BJ (cell line): ENCODE measurements at regions of chr21 and their contacts with region 1.

Region 1: GRCh38 chr21:39125752-39126485 is 57.3 kb downstream of the PSMG1 start:
- DNase-seq: no peak
- H3K4me3 ChIP-seq: no peak overlapping the region
- H3K27me3 ChIP-seq: no peaks in the 10 kb centered on the region; the same call in 1 of the 2 replicates
- CTCF ChIP-seq: peak; percentile 73

Region 2: DNA sequence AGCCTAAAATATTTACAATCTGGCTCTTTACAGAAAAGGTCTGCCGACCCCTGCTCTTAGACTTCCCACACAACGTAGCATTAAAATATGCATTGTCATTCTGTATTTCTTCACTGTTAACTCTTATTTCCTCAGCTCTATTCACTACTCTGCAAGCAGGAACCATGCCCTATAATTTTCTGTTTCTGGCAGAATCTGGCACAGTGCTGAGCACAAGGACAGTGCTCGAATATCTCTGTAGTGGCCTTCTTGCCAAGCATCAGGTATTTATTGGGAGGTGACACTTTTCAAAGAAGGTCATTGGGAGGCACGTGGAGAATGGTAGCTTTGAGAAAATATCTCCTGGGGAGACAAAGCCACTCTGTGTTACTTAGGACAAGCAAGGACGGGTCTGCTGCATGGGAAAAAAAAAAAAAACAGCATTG is 20.6 kb before region 1 on chr21:
- CTCF ChIA-PET with region 1: interaction called, 17 read pairs
- POLR2A ChIA-PET with region 1: no interaction called
- DNase-seq: no peak
- H3K4me3 ChIP-seq: no peak overlapping the region
- H3K27me3 ChIP-seq: 0 out of 2 replicates have a peak, but pooled peaks cover 3% of the 10 kb centered on the region
- CTCF ChIP-seq: no peak